ENCODE measurements at regions of chr5 and their contacts with region 1.

Region 1: DNA sequence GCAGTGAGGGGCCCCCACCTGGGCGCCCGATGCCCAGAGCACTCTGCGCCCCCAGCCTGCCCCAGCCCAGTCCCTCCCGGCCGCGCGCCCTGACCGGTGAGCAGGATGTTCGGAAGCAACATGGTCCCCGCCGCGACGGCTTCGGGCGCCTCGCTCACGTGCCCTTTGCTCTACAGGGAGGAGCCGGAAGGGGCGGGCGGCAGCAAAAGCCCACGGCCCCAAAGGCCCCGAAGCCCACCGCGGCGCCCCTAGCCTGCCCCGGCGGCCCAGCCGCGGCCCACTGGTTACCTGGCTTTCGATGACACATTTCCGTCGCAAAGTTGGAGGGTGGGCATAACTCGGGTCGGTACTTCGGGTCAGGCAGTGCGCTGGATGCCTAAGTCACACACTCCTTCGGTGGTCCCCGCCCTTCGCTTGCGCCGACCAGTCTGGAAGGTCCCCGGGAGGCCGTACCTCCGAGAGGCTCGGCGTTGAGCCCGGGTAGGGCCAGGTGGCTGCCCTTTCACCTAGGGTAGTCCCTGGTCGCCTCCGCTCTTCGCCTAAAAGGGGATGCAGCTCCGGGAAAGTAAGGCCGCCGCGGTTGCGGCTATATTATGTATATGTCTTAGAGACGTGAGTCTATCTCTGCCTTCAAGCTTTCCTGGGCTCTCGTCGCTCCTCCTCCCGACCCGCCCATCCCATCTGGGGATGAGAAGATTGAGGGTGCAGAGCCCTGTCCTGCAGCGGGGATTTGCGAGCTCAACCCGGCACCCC is at the starts of genes AK6, RAD17 and TAF9:
- DNase-seq: peak; percentile 94
- H3K4me3 Mint-ChIP-seq: peak within 1 kb of the TSS; percentile 96
- H3K27ac Mint-ChIP-seq: peak within 1 kb of the TSS; percentile 96
- H3K4me1 Mint-ChIP-seq: peaks cover 42% of the 10 kb centered on the region
- H3K27me3 Mint-ChIP-seq: no peaks in the 10 kb centered on the region
- total RNA-seq, gene AK6: 102 to 103 TPM
- total RNA-seq, gene RAD17: 24.1 to 26.2 TPM
- total RNA-seq, gene TAF9: 74.9 to 79.1 TPM

Region 2: GRCh38 chr5:69105996-69106906 is 263.3 kb before region 1 on chr5:
- CTCF ChIA-PET with region 1: no interaction called
- intact Hi-C with region 1: loop called (anchors 5 kb)
- DNase-seq: no peak
- H3K4me3 Mint-ChIP-seq: no peak overlapping the region
- H3K27ac Mint-ChIP-seq: no peak overlapping the region
- H3K4me1 Mint-ChIP-seq: peaks cover 3% of the 10 kb centered on the region
- H3K27me3 Mint-ChIP-seq: no peaks in the 10 kb centered on the region

Region 3: DNA sequence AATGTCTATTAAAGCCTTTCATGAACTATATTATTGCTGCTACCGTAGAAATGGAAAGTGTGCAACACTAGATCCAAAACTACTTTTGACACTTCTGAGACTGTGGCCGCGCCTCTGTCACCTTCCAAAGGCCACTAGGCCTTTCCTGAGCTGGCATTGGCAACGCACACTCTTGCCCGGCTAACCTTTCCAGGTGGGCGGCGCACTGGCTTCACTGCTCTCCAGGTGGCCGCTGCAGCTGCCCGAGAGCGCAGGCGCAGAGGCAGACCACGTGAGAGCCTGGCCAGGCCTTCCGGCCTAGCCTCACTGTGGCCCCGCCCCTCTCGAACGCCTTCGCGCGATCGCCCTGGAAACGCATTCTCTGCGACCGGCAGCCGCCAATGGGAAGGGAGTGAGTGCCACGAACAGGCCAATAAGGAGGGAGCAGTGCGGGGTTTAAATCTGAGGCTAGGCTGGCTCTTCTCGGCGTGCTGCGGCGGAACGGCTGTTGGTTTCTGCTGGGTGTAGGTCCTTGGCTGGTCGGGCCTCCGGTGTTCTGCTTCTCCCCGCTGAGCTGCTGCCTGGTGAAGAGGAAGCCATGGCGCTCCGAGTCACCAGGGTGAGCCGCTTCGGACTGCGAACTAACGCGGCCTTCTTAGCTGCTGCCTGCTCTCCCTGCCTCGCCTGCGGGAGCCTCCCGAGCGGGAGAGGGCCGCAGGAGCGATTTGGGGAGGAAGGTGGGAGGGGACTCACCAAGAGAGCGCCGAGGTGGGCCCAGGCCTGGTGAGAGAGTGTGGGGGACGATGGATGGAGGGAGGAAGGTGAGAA is 202.7 kb before region 1 on chr5 and contains the start of gene CCNB1:
- CTCF ChIA-PET with region 1: no interaction called
- intact Hi-C with region 1: loop called (anchors 1 kb)
- DNase-seq: peak; percentile 99
- H3K4me3 Mint-ChIP-seq: peak within 1 kb of the TSS; percentile 95
- H3K27ac Mint-ChIP-seq: peak within 1 kb of the TSS; percentile 87
- H3K4me1 Mint-ChIP-seq: peaks cover 20% of the 10 kb centered on the region
- H3K27me3 Mint-ChIP-seq: no peaks in the 10 kb centered on the region
- total RNA-seq, gene CCNB1: 209 to 211 TPM

Region 4: GRCh38 chr5:69217548-69218526 is 151.7 kb before region 1 on chr5:
- CTCF ChIA-PET with region 1: no interaction called
- intact Hi-C with region 1: loop called (anchors 1 kb)
- DNase-seq: peak; percentile 93
- H3K4me3 Mint-ChIP-seq: peak overlapping the region; percentile 99
- H3K27ac Mint-ChIP-seq: peak overlapping the region; percentile 93
- H3K4me1 Mint-ChIP-seq: peaks cover 14% of the 10 kb centered on the region
- H3K27me3 Mint-ChIP-seq: no peaks in the 10 kb centered on the region

Region 5: DNA sequence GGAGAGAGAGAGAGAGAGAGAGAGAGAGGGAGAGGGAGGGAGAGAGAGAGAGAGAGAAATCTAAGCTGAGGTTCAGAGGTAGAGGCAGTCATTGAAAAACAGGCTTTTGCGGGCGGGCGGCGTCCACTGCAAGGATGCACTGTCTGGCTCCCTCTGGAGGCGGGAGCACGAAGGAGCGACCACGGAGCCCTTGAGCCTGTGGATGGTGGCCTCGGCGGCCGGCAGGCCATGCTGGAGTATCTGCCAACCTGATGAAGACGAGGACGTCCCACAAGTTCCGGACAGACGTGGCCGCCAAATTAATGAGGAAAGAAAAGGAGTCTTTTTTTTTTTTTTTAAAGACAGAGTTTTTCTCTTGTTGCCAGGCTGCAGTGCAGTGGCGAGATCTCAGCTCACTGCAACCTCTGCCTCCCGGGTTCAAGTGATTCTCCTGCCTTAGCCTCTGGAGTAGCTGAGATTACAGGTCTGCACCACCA is 34.7 kb before region 1 on chr5:
- CTCF ChIA-PET with region 1: interaction called, 3 read pairs
- intact Hi-C with region 1: loop called (anchors 1 kb)
- DNase-seq: peak; percentile 88
- H3K4me3 Mint-ChIP-seq: peak overlapping the region; percentile 24
- H3K27ac Mint-ChIP-seq: no peak overlapping the region
- H3K4me1 Mint-ChIP-seq: peaks cover 13% of the 10 kb centered on the region
- H3K27me3 Mint-ChIP-seq: no peaks in the 10 kb centered on the region

Region 6: GRCh38 chr5:69350664-69351063 is 18.9 kb before region 1 on chr5:
- CTCF ChIA-PET with region 1: no interaction called
- intact Hi-C with region 1: no loop called
- DNase-seq: no peak
- H3K4me3 Mint-ChIP-seq: no peak overlapping the region
- H3K27ac Mint-ChIP-seq: no peak overlapping the region
- H3K4me1 Mint-ChIP-seq: peaks cover 4% of the 10 kb centered on the region
- H3K27me3 Mint-ChIP-seq: no peaks in the 10 kb centered on the region